ENCODE measurements at regions of chr6 and their contacts with region 1.

Region 1: DNA sequence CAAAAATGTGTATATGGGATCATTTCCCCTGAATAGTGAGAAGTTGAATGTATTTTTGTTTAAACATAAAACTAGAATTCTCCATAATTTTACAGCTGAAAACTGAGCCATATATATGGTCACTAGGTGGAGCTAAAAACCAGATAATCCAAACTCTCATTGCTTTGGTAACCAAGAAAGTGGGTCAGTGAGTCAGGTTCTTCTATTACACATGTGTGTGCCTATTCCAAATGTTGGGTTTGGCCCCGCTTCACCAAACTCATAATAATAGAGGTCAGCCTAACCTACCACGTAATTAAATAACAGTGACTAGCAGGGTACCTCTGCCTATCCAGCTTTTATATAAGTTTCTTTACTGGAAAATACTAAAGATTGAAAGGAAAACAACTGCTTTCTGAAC is 19.3 kb upstream of the RNGTT start:
- DNase-seq: no peak
- H3K4me3 ChIP-seq: no peak overlapping the region
- H3K27ac ChIP-seq: peak overlapping the region; percentile 46
- H3K4me1 ChIP-seq: peaks cover 11% of the 10 kb centered on the region
- H3K27me3 ChIP-seq: no peaks in the 10 kb centered on the region
- CTCF ChIP-seq: peak in 2 of 3 experiments; percentile 73 to 83
- POLR2A ChIP-seq: no peak

Region 2: GRCh38 chr6:88899569-88900316 is 83.0 kb before region 1 on chr6:
- intact Hi-C with region 1: no loop called
- DNase-seq: no peak
- H3K4me3 ChIP-seq: no peak overlapping the region
- H3K27ac ChIP-seq: no peak overlapping the region
- H3K4me1 ChIP-seq: no peaks in the 10 kb centered on the region
- H3K27me3 ChIP-seq: no peaks in the 10 kb centered on the region
- CTCF ChIP-seq: no peak
- POLR2A ChIP-seq: no peak

Region 3: GRCh38 chr6:89117211-89118108 is 134.7 kb after region 1 on chr6 and contains the start of gene SRSF12:
- intact Hi-C with region 1: loop called (anchors 10 kb)
- DNase-seq: no peak
- H3K4me3 ChIP-seq: peak within 1 kb of the TSS; percentile 66 to 69
- H3K27ac ChIP-seq: peak within 1 kb of the TSS; percentile 57
- H3K4me1 ChIP-seq: peaks cover 18% of the 10 kb centered on the region
- H3K27me3 ChIP-seq: no peaks in the 10 kb centered on the region
- CTCF ChIP-seq: no peak
- POLR2A ChIP-seq: no peak
- total RNA-seq, gene SRSF12: 0.25 TPM

Region 4: GRCh38 chr6:89242574-89243330 is 260.0 kb after region 1 on chr6:
- intact Hi-C with region 1: loop called (anchors 10 kb)
- DNase-seq: no peak
- H3K4me3 ChIP-seq: no peak overlapping the region
- H3K27ac ChIP-seq: no peak overlapping the region
- H3K4me1 ChIP-seq: no peaks in the 10 kb centered on the region
- H3K27me3 ChIP-seq: no peaks in the 10 kb centered on the region
- CTCF ChIP-seq: peak in 2 of 3 experiments; percentile 48 to 50
- POLR2A ChIP-seq: no peak

Region 5: GRCh38 chr6:89518317-89519050 is 535.8 kb after region 1 on chr6:
- intact Hi-C with region 1: no loop called
- DNase-seq: no peak
- H3K4me3 ChIP-seq: no peak overlapping the region
- H3K27ac ChIP-seq: no peak overlapping the region
- H3K4me1 ChIP-seq: no peaks in the 10 kb centered on the region
- H3K27me3 ChIP-seq: no peaks in the 10 kb centered on the region
- CTCF ChIP-seq: no peak
- POLR2A ChIP-seq: no peak

Measured in vagina (tissue), 2 donors.